ENCODE measurements at regions of chr19 and their contacts with region 1.

Region 1: DNA sequence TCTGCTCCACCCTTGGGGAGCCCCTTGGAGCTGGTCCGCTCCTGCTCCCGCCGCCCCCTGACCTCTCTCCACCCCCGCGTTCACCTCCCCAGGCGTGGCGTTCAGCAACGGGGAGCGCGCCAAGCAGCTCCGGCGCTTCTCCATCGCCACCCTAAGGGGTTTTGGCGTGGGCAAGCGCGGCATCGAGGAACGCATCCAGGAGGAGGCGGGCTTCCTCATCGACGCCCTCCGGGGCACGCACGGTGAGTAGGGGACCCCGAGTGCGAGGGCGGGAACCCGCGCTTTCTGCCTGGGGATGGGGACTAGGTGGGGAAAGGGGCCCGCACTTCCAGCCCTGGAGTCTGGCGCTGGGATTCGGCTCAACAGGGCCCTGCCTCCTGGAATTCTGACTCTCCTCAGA is 1.7 kb downstream of the CYP2A13 start:
- DNase-seq: no peak
- H3K4me3 Mint-ChIP-seq: no peak overlapping the region
- H3K27ac Mint-ChIP-seq: no peak overlapping the region
- H3K4me1 Mint-ChIP-seq: peaks cover 2% of the 10 kb centered on the region
- H3K27me3 Mint-ChIP-seq: peaks cover 33% of the 10 kb centered on the region

Region 2: DNA sequence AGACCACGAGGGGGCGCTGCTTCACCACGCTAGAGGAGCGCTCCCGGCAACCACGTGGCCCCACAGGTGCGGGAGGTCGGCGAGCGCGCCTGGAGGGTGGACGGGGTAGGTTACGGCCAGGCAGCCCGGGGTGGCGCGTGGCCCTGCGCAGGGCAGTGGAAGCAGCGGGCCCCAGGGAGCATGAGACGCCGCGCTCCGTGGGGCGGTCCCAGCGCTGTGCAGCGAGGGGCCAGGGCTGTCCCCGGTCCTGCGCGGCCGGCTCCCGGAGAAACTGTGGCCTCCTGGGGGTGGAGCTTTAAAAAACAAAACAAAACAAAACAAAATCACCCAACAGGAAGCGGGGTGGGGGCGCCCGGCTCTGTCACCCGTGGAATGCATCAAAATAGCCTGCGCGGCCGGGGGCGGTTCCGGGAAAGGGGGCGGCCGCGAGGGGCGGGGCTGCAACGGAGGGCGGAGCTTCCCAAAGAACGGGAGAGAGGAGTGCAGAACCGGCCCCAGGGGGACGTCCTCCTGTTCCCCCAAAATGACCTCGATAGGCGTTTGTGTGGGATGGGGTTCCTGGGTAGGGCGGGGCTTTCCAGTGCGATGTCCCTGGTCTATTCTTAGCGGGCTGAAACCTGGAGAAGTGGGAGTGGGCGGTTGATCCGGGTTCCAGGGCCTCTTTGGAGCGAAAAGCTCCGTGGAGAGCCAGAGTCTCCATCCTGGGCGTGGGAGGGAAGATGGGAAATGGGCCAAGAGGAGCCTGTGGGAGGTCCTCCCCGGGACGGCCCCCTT is 426.8 kb before region 1 on chr19:
- CTCF ChIA-PET with region 1: no interaction called
- intact Hi-C with region 1: no loop called
- DNase-seq: peak; percentile 91
- H3K4me3 Mint-ChIP-seq: peak overlapping the region; percentile 78
- H3K27ac Mint-ChIP-seq: peak overlapping the region; percentile 71
- H3K4me1 Mint-ChIP-seq: peaks cover 20% of the 10 kb centered on the region
- H3K27me3 Mint-ChIP-seq: no peaks in the 10 kb centered on the region

Region 3: DNA sequence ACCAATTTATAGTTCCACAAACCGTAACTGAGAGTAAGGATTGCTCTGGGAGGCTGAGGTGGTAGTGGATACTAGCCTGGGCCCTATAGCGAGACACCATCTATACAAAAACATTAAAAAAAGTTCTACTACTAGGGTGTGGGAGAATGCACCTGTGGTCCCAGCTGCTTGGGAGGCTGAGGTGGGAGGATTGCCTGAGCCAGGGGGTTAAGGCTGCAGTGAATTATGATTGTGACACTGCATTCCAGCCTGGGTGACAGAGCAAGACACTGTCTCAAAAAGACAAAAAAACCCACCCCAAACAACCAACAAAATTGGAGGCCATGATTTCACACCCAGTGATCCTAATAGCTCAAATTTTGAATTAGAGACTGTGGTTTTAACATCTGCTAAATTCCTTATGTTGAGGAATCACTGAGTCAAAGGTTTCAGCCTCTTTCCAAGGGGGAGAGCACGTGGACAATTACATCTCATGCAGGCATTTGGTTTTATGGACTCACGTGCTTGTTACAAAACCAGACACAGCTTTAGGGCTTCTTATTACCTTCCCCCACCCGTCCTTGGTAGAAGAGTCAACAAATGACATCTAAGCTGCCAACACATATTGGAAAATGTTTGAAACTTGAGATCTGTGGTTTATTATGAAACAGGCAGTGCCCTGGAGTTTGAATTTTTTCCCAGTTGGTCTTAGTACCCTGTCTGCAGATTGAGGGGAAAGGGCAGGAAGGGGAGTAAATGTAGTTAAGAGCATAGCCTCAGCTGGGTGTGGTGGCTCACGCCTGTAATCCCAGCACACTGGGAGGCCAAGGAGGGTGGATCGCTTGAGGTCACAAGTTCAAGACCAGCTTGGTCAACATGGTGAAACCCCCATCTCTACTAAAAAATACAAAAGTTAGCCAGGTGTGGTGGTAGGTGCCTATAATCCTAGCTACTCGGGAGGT is 258.2 kb before region 1 on chr19:
- CTCF ChIA-PET with region 1: no interaction called
- intact Hi-C with region 1: no loop called
- DNase-seq: no peak
- H3K4me3 Mint-ChIP-seq: no peak overlapping the region
- H3K27ac Mint-ChIP-seq: no peak overlapping the region
- H3K4me1 Mint-ChIP-seq: peaks cover 19% of the 10 kb centered on the region
- H3K27me3 Mint-ChIP-seq: no peaks in the 10 kb centered on the region

Region 4: GRCh38 chr19:41023193-41023592 is 66.8 kb before region 1 on chr19:
- CTCF ChIA-PET with region 1: no interaction called
- intact Hi-C with region 1: loop called (anchors 10 kb)
- DNase-seq: no peak
- H3K4me3 Mint-ChIP-seq: no peak overlapping the region
- H3K27ac Mint-ChIP-seq: no peak overlapping the region
- H3K4me1 Mint-ChIP-seq: no peaks in the 10 kb centered on the region
- H3K27me3 Mint-ChIP-seq: peaks cover 24% of the 10 kb centered on the region

Region 5: DNA sequence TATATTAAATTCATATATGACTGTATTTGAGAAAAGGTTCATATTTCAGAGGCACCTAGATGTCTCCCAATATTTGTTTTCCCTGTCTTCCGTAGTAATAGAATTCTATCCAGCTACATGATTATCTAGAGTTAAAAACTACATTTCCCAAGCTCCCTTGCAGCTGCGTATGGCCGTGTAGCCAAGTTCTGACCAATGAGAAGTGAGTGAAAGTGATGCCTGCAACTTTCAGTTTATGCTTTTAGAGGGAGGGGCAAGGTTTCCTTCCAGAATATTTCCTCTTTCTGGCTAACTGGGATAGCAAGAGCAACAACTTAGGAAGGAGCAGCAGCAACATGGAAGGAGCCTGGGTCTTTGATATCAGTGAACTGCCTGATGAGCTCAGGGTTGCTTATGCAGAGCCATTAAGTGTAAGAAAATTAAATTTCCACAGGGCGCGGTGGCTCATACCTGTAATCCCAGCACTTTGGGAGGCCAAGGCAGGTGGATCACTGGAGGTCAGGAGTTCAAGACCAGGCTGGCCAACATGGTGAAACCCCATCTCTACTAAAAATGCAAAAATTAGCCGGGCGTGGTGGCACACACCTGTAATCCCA is 24.9 kb before region 1 on chr19:
- CTCF ChIA-PET with region 1: no interaction called
- intact Hi-C with region 1: no loop called
- DNase-seq: no peak
- H3K4me3 Mint-ChIP-seq: no peak overlapping the region
- H3K27ac Mint-ChIP-seq: no peak overlapping the region
- H3K4me1 Mint-ChIP-seq: peaks cover 2% of the 10 kb centered on the region
- H3K27me3 Mint-ChIP-seq: peaks cover 8% of the 10 kb centered on the region

Region 6: GRCh38 chr19:41205994-41206393 is 116.0 kb after region 1 on chr19:
- CTCF ChIA-PET with region 1: no interaction called
- intact Hi-C with region 1: no loop called
- DNase-seq: peak; percentile 23
- H3K4me3 Mint-ChIP-seq: no peak overlapping the region
- H3K27ac Mint-ChIP-seq: no peak overlapping the region
- H3K4me1 Mint-ChIP-seq: peaks cover 4% of the 10 kb centered on the region
- H3K27me3 Mint-ChIP-seq: no peaks in the 10 kb centered on the region